ENCODE measurements at regions of chr11 and their contacts with region 1.

Region 1: DNA sequence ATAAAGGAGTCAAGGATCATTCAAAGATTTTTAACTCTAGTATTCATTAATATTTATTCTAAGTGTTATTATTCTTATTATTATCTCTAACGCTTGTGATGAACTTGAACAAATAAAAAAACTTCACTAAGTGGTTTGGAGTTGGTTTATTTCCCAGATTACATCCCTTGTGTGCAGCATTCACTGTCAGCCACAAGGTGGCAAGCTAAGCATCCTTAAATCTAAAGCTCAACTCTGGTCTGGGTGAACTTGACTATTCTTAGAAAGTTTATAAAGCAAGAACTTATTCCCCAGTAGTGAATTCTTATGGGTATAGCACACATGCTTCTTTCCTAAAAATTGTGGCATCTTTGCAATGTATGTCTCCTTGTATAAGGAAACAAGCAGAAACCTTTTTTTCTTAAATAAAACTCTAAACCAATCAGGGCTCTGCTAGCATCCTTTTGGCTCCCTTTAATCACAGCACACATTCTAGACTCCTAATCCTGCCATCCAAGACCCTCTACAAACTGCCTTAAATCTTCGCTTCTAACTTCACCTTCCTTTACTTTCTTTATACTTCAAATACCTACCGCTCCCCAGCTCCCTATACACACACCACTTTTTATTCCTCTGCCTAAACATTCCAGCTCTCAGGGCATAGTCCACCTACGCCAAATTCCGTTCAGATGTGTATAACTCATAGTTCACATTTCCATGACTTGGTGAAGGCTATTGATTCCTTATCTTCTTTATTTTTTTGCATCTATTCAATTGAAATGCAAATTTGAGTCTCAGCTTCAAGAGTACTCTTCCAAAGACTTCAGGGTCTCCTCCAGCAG is 1068.8 kb downstream of the DLG2 start:
- DNase-seq: peak; percentile 71
- ATAC-seq: peak; percentile 88
- H3K4me3 ChIP-seq: no peak overlapping the region
- H3K27ac ChIP-seq: no peak overlapping the region
- H3K4me1 ChIP-seq: no peaks in the 10 kb centered on the region
- H3K27me3 ChIP-seq: peaks cover 9% of the 10 kb centered on the region; the same call in 1 of the 2 replicates
- CTCF ChIP-seq: peak; percentile 87

Region 2: GRCh38 chr11:84580428-84580827 is 22.1 kb after region 1 on chr11:
- CTCF ChIA-PET with region 1: no interaction called
- POLR2A ChIA-PET with region 1: no interaction called
- intact Hi-C with region 1: no loop called
- DNase-seq: no peak
- ATAC-seq: no peak
- H3K4me3 ChIP-seq: peak overlapping the region; percentile 2; the same call in 1 of the 2 replicates
- H3K27ac ChIP-seq: no peak overlapping the region
- H3K4me1 ChIP-seq: no peaks in the 10 kb centered on the region
- H3K27me3 ChIP-seq: no peaks in the 10 kb centered on the region
- CTCF ChIP-seq: no peak

Region 3: GRCh38 chr11:84714316-84714780 is 156.1 kb after region 1 on chr11:
- CTCF ChIA-PET with region 1: no interaction called
- POLR2A ChIA-PET with region 1: no interaction called
- intact Hi-C with region 1: loop called (anchors 1 kb)
- DNase-seq: peak; percentile 83
- ATAC-seq: peak; percentile 67
- H3K4me3 ChIP-seq: no peak overlapping the region
- H3K27ac ChIP-seq: no peak overlapping the region
- H3K4me1 ChIP-seq: no peaks in the 10 kb centered on the region
- H3K27me3 ChIP-seq: peaks cover 12% of the 10 kb centered on the region
- CTCF ChIP-seq: peak; percentile 78

Region 4: GRCh38 chr11:84775503-84775902 is 217.2 kb after region 1 on chr11:
- CTCF ChIA-PET with region 1: no interaction called
- POLR2A ChIA-PET with region 1: no interaction called
- intact Hi-C with region 1: loop called (anchors 10 kb)
- DNase-seq: no peak
- ATAC-seq: no peak
- H3K4me3 ChIP-seq: no peak overlapping the region
- H3K27ac ChIP-seq: no peak overlapping the region
- H3K4me1 ChIP-seq: no peaks in the 10 kb centered on the region
- H3K27me3 ChIP-seq: peaks cover 11% of the 10 kb centered on the region; the same call in 1 of the 2 replicates
- CTCF ChIP-seq: no peak